ENCODE measurements at regions of chr1 and their contacts with region 1.

Region 1: DNA sequence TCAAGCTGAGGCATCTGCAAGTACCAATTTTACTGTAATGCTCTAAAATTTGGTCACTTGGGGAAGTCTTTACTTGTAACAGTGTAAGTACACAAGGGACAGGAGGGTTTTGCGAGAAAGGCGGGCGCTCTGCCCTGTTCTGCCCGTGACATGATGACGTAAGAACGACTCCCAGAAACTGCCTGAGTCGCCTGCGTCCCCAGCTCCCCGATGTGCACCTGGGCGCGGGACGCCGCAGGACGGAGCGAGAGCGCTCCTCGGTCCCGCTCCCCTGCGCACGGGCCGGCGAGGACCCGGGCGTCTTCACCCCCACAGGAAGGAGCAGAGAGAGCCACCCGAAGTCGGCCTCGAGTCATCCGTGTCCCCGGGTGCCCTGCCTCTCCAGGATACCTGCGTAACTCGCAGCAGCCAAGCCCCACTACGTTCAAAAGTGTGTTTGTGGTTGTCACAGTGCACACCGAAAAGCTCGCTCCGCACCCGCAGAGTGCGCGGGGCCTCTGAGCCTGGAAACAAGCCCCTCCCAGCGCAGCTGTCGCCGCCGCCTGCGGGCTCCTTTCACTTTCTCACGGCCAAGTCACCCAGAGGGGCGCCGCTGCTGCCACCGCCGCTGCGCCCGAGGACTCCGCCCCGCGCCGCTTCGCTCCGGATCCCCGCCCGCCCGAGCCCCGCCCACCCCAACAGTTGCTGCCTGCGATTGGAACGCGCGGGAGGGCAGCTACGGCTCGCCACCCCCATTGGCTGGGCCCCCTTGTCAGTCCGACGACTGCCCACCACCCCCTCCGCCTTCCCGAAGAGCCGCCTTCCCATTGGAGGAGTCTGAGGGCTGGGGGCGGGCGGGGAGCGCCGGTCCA is 3.2 kb upstream of the ZBTB18 start:
- DNase-seq: peak; percentile 98
- H3K4me3 Mint-ChIP-seq: peak overlapping the region; percentile 95
- H3K27ac Mint-ChIP-seq: peak overlapping the region; percentile 94
- H3K4me1 Mint-ChIP-seq: peaks cover 32% of the 10 kb centered on the region
- H3K27me3 Mint-ChIP-seq: peaks cover 31% of the 10 kb centered on the region

Region 2: GRCh38 chr1:243255791-243256512 is 791.9 kb before region 1 on chr1 and contains the start of gene SDCCAG8:
- CTCF ChIA-PET with region 1: no interaction called
- POLR2A ChIA-PET with region 1: interaction called, 11 read pairs
- DNase-seq: peak; percentile 96
- H3K4me3 Mint-ChIP-seq: peak within 1 kb of the TSS; percentile 95
- H3K27ac Mint-ChIP-seq: peak within 1 kb of the TSS; percentile 97
- H3K4me1 Mint-ChIP-seq: peaks cover 29% of the 10 kb centered on the region
- H3K27me3 Mint-ChIP-seq: no peaks in the 10 kb centered on the region
- total RNA-seq, gene SDCCAG8: 18.8 to 20.3 TPM

Region 3: DNA sequence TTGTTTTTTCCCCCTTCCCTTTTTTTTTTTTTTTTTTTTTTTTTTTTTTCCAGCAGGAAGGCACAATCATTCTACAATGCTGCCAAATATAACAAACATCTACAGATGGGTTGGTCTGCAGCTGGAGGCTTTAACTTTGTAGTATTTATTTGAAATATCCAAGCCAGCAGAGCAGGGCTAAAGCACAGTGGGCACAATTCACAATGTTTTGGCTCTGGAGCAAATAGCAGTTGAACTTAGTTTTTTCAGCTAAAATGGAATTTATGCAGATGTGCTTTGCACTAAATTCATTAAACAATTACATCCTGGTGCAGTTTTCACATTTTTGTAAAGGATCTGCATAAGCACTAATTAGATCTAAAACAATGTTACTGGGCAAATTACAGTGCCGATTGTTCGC is 36.6 kb before region 1 on chr1:
- CTCF ChIA-PET with region 1: no interaction called
- POLR2A ChIA-PET with region 1: no interaction called
- DNase-seq: no peak
- H3K4me3 Mint-ChIP-seq: no peak overlapping the region
- H3K27ac Mint-ChIP-seq: no peak overlapping the region
- H3K4me1 Mint-ChIP-seq: no peaks in the 10 kb centered on the region
- H3K27me3 Mint-ChIP-seq: peaks cover 8% of the 10 kb centered on the region

Region 4: GRCh38 chr1:244021947-244022700 is 25.7 kb before region 1 on chr1:
- CTCF ChIA-PET with region 1: no interaction called
- POLR2A ChIA-PET with region 1: no interaction called
- DNase-seq: no peak
- H3K4me3 Mint-ChIP-seq: no peak overlapping the region
- H3K27ac Mint-ChIP-seq: no peak overlapping the region
- H3K4me1 Mint-ChIP-seq: no peaks in the 10 kb centered on the region
- H3K27me3 Mint-ChIP-seq: peaks cover 6% of the 10 kb centered on the region

Region 5: GRCh38 chr1:244074559-244075171 is 26.8 kb after region 1 on chr1:
- CTCF ChIA-PET with region 1: interaction called, 3 read pairs
- POLR2A ChIA-PET with region 1: interaction called, 20 read pairs
- DNase-seq: peak; percentile 58
- H3K4me3 Mint-ChIP-seq: peak overlapping the region; percentile 8
- H3K27ac Mint-ChIP-seq: peak overlapping the region; percentile 48
- H3K4me1 Mint-ChIP-seq: peaks cover 20% of the 10 kb centered on the region
- H3K27me3 Mint-ChIP-seq: peaks cover 14% of the 10 kb centered on the region

Measured in activated CD4-positive, alpha-beta memory T cell treated with anti-CD3 and anti-CD28 coated beads, Interleukin-2, amount 10 ng/mL, durations not matched to agents 7 days and 5 days (primary cell).